ENCODE measurements at regions of chr1 and their contacts with region 1.

Region 1: GRCh38 chr1:88746916-88747315 is 62.8 kb downstream of the PKN2 start:
- DNase-seq: no peak
- H3K4me3 ChIP-seq: no peak overlapping the region
- CTCF ChIP-seq: no peak

Region 2: GRCh38 chr1:88678405-88678804 is 68.5 kb before region 1 on chr1:
- in situ Hi-C with region 1: loop called (anchors 5 kb)
- DNase-seq: no peak
- H3K4me3 ChIP-seq: no peak overlapping the region
- CTCF ChIP-seq: no peak